CD8-positive, alpha-beta T cell (primary cell): ENCODE measurements at regions of chr4 and their contacts with region 1.

Region 1: DNA sequence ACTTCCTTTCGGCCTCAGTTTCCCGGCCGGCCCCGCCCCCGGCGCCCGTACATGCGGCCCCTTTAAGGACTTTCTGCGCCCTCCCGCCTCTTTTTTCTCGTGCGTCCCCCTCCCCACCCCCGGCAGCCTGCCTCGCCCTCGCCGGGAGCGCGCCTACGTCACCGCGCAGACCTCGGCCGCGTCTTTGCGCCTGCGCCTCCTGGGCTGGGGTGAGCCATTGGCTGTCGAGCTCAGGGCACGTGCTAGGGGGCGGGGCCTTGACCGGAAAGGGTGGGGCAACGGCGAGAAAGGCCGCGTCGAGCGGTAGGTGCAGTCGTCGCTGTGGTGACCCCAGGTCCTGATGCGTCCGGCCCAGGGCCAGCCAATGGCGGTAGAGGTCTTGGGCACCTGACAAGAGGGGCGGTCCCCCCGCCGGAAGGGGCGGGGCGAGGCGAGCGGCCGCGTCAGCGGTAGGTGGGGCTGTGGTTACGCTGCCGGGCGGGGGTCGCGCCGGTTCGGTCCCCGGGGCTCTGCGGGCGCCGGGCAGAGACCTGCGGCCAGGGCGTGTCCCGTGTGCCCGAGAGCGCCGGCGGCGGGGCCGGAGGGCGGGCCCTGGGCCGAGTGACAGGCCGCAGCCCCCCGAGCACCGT is at the start of gene UVSSA:
- DNase-seq: peak; percentile 100
- ATAC-seq: peak; percentile 90
- H3K4me3 ChIP-seq: peak within 1 kb of the TSS; percentile 72 to 96
- H3K4me3 Mint-ChIP-seq: peak within 1 kb of the TSS; percentile 89
- H3K27ac ChIP-seq: peak within 1 kb of the TSS; percentile 89 to 92
- H3K27ac Mint-ChIP-seq: peak within 1 kb of the TSS; percentile 95
- H3K4me1 ChIP-seq: peaks cover 23% of the 10 kb centered on the region
- H3K4me1 Mint-ChIP-seq: peaks cover 42% of the 10 kb centered on the region
- H3K27me3 ChIP-seq: no peaks in the 10 kb centered on the region
- H3K27me3 Mint-ChIP-seq: no peaks in the 10 kb centered on the region
- CTCF ChIP-seq: no peak
- total RNA-seq, gene UVSSA: 27.3 to 27.5 TPM

Region 2: GRCh38 chr4:931960-932712 is 414.8 kb before region 1 on chr4 and contains the starts of genes GAK and TMEM175:
- CTCF ChIA-PET with region 1: no interaction called
- POLR2A ChIA-PET with region 1: no interaction called
- intact Hi-C with region 1: loop called in 1 of 2 experiments (anchors 2 kb)
- DNase-seq: peak; percentile 90 to 99 (median 96)
- ATAC-seq: peak; percentile 91
- H3K4me3 ChIP-seq: peak within 1 kb of the TSS; percentile 91 to 96
- H3K4me3 Mint-ChIP-seq: peak within 1 kb of the TSS; percentile 96
- H3K27ac ChIP-seq: peak within 1 kb of the TSS; percentile 91 to 92
- H3K27ac Mint-ChIP-seq: peak within 1 kb of the TSS; percentile 97
- H3K4me1 ChIP-seq: peaks cover 39% of the 10 kb centered on the region
- H3K4me1 Mint-ChIP-seq: peaks cover 51% of the 10 kb centered on the region
- H3K27me3 ChIP-seq: no peaks in the 10 kb centered on the region
- H3K27me3 Mint-ChIP-seq: no peaks in the 10 kb centered on the region
- CTCF ChIP-seq: no peak
- total RNA-seq, gene GAK: 161 to 162 TPM
- total RNA-seq, gene TMEM175: 44.9 to 47.2 TPM

Region 3: GRCh38 chr4:1167247-1167949 is 179.5 kb before region 1 on chr4:
- CTCF ChIA-PET with region 1: interaction called, 5 read pairs
- POLR2A ChIA-PET with region 1: no interaction called
- intact Hi-C with region 1: loop called (anchors 1 kb)
- DNase-seq: peak; percentile 79 to 98 (median 91)
- ATAC-seq: peak; percentile 84
- H3K4me3 ChIP-seq: peak overlapping the region; percentile 92 to 97
- H3K4me3 Mint-ChIP-seq: peak overlapping the region; percentile 88
- H3K27ac ChIP-seq: peak overlapping the region; percentile 70 to 85
- H3K27ac Mint-ChIP-seq: peak overlapping the region; percentile 83
- H3K4me1 ChIP-seq: peaks cover 28% of the 10 kb centered on the region
- H3K4me1 Mint-ChIP-seq: peaks cover 26% of the 10 kb centered on the region
- H3K27me3 ChIP-seq: peaks cover 11 to 13% of the 10 kb centered on the region in 2 experiments
- H3K27me3 Mint-ChIP-seq: peaks cover 7% of the 10 kb centered on the region
- CTCF ChIP-seq: peak; percentile 97

Region 4: GRCh38 chr4:1289207-1290164 is 57.4 kb before region 1 on chr4 and contains the start of gene MAEA:
- CTCF ChIA-PET with region 1: interaction called, 5 read pairs
- POLR2A ChIA-PET with region 1: interaction called, 14 read pairs
- intact Hi-C with region 1: loop called (anchors 1 kb)
- DNase-seq: peak; percentile 94 to 98 (median 96)
- ATAC-seq: peak; percentile 97
- H3K4me3 ChIP-seq: peak within 1 kb of the TSS; percentile 57 to 92
- H3K4me3 Mint-ChIP-seq: peak within 1 kb of the TSS; percentile 92
- H3K27ac ChIP-seq: peak within 1 kb of the TSS; percentile 74 to 80
- H3K27ac Mint-ChIP-seq: peak within 1 kb of the TSS; percentile 91
- H3K4me1 ChIP-seq: peaks cover 38% of the 10 kb centered on the region
- H3K4me1 Mint-ChIP-seq: peaks cover 42% of the 10 kb centered on the region
- H3K27me3 ChIP-seq: no peaks in the 10 kb centered on the region
- H3K27me3 Mint-ChIP-seq: no peaks in the 10 kb centered on the region
- CTCF ChIP-seq: no peak
- total RNA-seq, gene MAEA: 74.6 to 77.6 TPM

Region 5: DNA sequence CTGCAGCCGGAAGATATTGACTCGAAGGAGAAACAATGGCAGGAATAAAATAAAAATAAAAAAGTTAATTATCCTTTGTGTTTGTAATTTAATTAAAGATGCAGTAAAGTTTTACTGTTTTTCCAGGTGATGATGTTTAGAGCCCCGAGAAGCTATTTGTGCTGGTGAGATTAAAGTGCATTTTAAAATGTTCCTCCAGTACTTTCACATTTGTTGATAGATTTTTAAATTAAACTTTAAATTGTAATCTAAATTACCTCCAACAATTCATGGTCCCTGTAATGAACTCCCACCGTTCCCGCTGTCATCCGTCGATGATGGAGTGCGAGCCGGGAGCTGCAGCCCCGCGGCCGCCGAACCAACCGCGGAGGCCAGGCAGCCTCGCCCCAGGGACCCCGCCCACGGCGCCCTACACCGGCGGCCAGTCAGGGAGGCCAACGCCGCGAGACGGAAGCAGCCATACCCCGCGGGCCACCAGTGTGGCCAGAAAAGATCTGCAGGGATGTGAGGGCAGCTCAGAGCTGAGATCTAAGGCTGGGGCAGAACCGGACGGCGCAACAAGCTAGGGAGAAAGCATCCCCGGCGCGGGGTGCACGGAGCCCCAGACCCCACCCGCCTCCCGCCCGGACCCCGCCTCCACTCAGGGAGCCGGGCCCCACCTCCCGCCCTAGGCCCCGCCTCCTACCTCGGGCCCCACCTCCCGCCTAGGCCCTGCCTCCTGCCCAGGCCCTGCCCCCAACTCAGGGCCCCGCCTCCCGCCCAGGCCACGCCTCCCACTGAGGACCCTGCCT is 233.2 kb after region 1 on chr4:
- CTCF ChIA-PET with region 1: no interaction called
- POLR2A ChIA-PET with region 1: interaction called, 4 read pairs
- intact Hi-C with region 1: loop called in 1 of 2 experiments (anchors 1 kb)
- DNase-seq: peak; percentile 83 to 96 (median 93)
- ATAC-seq: peak; percentile 82
- H3K4me3 ChIP-seq: peak overlapping the region; percentile 70 to 78
- H3K4me3 Mint-ChIP-seq: peak overlapping the region; percentile 79
- H3K27ac ChIP-seq: peak overlapping the region; percentile 66 to 73
- H3K27ac Mint-ChIP-seq: peak overlapping the region; percentile 79
- H3K4me1 ChIP-seq: no peaks in the 10 kb centered on the region
- H3K4me1 Mint-ChIP-seq: peaks cover 11% of the 10 kb centered on the region
- H3K27me3 ChIP-seq: no peaks in the 10 kb centered on the region
- H3K27me3 Mint-ChIP-seq: no peaks in the 10 kb centered on the region
- CTCF ChIP-seq: no peak

Region 6: DNA sequence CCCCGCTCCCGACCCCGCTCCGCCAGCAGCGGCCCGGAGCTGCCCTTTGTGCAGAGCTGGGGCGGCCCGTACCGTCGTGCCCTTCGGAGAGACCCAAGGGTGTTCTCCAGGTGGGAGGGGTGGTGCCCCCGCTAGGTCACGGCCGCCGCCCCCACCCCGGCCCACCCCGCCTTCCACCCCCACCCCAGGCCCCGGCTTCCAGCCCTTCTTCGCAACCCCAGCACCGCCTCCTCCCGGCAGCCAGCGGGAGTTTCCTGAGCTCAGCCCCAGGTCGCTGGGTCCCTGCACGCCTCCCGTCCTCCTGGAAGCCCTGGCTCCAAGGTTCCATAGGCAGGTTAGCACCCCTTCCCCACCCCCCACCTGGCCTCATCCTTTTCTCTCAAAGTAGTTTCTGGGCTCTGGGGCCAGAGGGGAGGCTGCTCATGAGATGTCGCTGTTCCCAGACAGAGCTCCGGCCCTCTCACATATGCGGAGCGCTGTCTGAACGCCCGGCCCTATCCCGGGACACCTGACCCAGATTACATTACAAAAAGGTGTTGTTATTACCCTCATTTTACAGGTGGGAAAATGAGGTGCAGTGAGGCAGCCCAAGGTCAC is 421.0 kb after region 1 on chr4:
- CTCF ChIA-PET with region 1: no interaction called
- POLR2A ChIA-PET with region 1: no interaction called
- intact Hi-C with region 1: no loop called
- DNase-seq: peak in 4 of 9 experiments; percentile 31 to 40 (median 38)
- ATAC-seq: peak; percentile 42
- H3K4me3 ChIP-seq: no peak overlapping the region
- H3K4me3 Mint-ChIP-seq: peak overlapping the region; percentile 70
- H3K27ac ChIP-seq: no peak overlapping the region
- H3K27ac Mint-ChIP-seq: no peak overlapping the region
- H3K4me1 ChIP-seq: no peaks in the 10 kb centered on the region
- H3K4me1 Mint-ChIP-seq: peaks cover 6% of the 10 kb centered on the region
- H3K27me3 ChIP-seq: peaks cover 0 to 11% of the 10 kb centered on the region in 2 experiments
- H3K27me3 Mint-ChIP-seq: peaks cover 23% of the 10 kb centered on the region
- CTCF ChIP-seq: no peak

Region 7: GRCh38 chr4:1870578-1871443 is 523.9 kb after region 1 on chr4 and contains the start of gene NSD2:
- CTCF ChIA-PET with region 1: no interaction called
- POLR2A ChIA-PET with region 1: no interaction called
- intact Hi-C with region 1: loop called (anchors 5 kb)
- DNase-seq: peak; percentile 81 to 97 (median 88)
- ATAC-seq: peak; percentile 64
- H3K4me3 ChIP-seq: peak within 1 kb of the TSS; percentile 66 to 98
- H3K4me3 Mint-ChIP-seq: peak within 1 kb of the TSS; percentile 83
- H3K27ac ChIP-seq: peak within 1 kb of the TSS; percentile 81 to 98
- H3K27ac Mint-ChIP-seq: peak within 1 kb of the TSS; percentile 89
- H3K4me1 ChIP-seq: peaks cover 21% of the 10 kb centered on the region
- H3K4me1 Mint-ChIP-seq: peaks cover 31% of the 10 kb centered on the region
- H3K27me3 ChIP-seq: no peaks in the 10 kb centered on the region
- H3K27me3 Mint-ChIP-seq: no peaks in the 10 kb centered on the region
- CTCF ChIP-seq: no peak
- total RNA-seq, gene NSD2: 27.3 to 32.5 TPM